Mammary epithelial cell (primary cell): ENCODE measurements at regions of chr17 and their contacts with region 1.

Region 1: GRCh38 chr17:42517516-42517915 is 18.5 kb upstream of the NAGLU start:
- DNase-seq: peak; percentile 75
- H3K4me3 ChIP-seq: no peak overlapping the region
- H3K27ac ChIP-seq: no peak overlapping the region
- H3K4me1 ChIP-seq: peaks cover 44% of the 10 kb centered on the region
- H3K27me3 ChIP-seq: no peaks in the 10 kb centered on the region
- CTCF ChIP-seq: peak; percentile 92 to 98

Region 2: DNA sequence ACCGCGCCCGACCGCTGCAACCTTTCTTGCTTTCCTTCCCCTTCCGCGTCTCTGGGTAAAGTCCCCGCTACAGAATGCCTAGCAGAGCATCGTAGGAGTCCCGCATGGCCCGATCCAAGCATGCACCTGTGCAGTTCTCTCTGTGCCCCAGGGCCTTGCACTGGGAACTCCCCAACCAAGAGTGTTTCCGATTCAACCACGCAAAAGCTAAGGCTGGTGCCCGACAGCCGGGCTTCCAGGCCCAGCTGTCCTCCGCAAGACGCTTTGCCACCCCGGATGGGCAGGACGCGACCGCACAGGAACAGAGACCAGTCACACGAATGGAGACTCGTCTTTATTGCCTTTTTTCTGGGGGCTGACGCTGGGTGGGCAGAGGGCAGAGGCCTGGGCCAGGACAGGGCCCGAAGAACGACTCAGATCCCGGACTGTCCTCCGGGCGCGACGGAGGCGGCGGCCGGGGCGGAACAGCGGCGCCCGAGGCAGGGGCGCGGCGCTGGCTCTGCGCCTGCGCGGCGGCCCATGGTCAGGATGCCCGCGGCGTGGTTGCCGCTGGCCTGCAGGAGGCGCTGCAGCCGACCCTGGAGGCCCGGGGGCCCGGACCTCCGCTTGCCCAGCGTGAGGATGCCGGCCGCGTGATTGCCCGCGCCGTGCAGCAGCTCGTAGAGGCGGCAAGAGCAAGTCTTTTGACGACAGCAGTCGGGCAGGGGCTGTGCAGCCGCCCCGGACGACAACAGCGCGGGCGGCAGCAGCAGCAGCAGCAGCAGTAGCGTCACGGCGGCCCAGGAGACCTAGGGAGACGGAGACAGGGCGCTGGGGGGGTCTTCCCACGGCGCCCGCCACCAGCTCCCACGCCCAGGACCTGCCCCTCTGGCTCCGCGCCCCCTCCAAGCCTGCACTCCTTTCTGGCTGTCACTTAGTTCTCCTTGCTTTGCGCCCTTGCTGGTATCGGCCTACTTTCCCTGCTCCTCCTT is 333.5 kb before region 1 on chr17:
- CTCF ChIA-PET with region 1: interaction called, 3 read pairs
- dilution Hi-C with region 1: loop called (anchors 5 kb)
- in situ Hi-C with region 1: no loop called
- intact Hi-C with region 1: no loop called
- DNase-seq: peak; percentile 12
- H3K4me3 ChIP-seq: peak overlapping the region in 2 of 3 experiments; percentile 35 to 39
- H3K27ac ChIP-seq: no peak overlapping the region
- H3K4me1 ChIP-seq: peaks cover 21% of the 10 kb centered on the region
- H3K27me3 ChIP-seq: peaks cover 12% of the 10 kb centered on the region
- CTCF ChIP-seq: peak; percentile 39 to 47

Region 3: GRCh38 chr17:42322382-42323267 is 194.9 kb before region 1 on chr17:
- CTCF ChIA-PET with region 1: no interaction called
- dilution Hi-C with region 1: no loop called
- in situ Hi-C with region 1: loop called in 1 of 2 experiments (anchors 10 kb)
- intact Hi-C with region 1: loop called (anchors 1 kb)
- DNase-seq: peak; percentile 78
- H3K4me3 ChIP-seq: no peak overlapping the region
- H3K27ac ChIP-seq: no peak overlapping the region
- H3K4me1 ChIP-seq: peaks cover 29% of the 10 kb centered on the region
- H3K27me3 ChIP-seq: no peaks in the 10 kb centered on the region
- CTCF ChIP-seq: peak; percentile 100

Region 4: DNA sequence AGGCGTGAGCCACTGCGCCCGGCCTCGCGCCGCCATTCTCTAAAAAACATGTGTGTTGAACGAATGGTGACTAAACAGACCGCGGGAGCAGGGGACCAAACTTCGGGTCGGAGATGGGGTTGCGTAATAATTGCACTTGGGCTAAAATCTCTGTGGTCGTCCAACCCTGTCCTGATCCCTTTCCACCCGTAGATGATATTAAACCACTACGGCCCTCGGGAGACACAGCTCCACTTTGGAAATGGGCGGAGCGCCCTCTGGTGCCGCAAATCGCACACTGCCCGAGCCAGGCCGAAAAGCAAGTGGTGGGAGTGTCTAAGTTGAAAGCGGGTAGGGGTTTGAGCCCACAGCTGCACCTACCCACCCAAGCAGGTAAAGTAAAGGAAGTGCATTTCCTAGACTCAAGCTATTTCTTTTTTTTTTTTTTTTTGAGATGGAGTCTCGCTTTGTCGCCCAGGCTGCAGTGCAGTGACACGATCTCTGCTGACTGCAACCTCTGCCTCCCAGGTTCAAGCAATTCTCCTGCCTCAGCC is 111.5 kb before region 1 on chr17:
- CTCF ChIA-PET with region 1: no interaction called
- dilution Hi-C with region 1: no loop called
- in situ Hi-C with region 1: no loop called
- intact Hi-C with region 1: loop called (anchors 1 kb)
- DNase-seq: peak; percentile 26
- H3K4me3 ChIP-seq: no peak overlapping the region
- H3K27ac ChIP-seq: no peak overlapping the region
- H3K4me1 ChIP-seq: peaks cover 50% of the 10 kb centered on the region
- H3K27me3 ChIP-seq: no peaks in the 10 kb centered on the region
- CTCF ChIP-seq: peak; percentile 45 to 76

Region 5: GRCh38 chr17:42428141-42428944 is 89.2 kb before region 1 on chr17:
- CTCF ChIA-PET with region 1: no interaction called
- dilution Hi-C with region 1: loop called (anchors 5 kb)
- in situ Hi-C with region 1: no loop called
- intact Hi-C with region 1: loop called (anchors 1 kb)
- DNase-seq: peak; percentile 98
- H3K4me3 ChIP-seq: peak overlapping the region in 1 of 3 experiments; percentile 22
- H3K27ac ChIP-seq: peak overlapping the region; percentile 64
- H3K4me1 ChIP-seq: peaks cover 11% of the 10 kb centered on the region
- H3K27me3 ChIP-seq: no peaks in the 10 kb centered on the region
- CTCF ChIP-seq: peak; percentile 85 to 95

Region 6: GRCh38 chr17:42459256-42459800 is 58.2 kb before region 1 on chr17:
- CTCF ChIA-PET with region 1: interaction called, 4 read pairs
- dilution Hi-C with region 1: no loop called
- in situ Hi-C with region 1: no loop called
- intact Hi-C with region 1: loop called (anchors 2 kb)
- DNase-seq: peak; percentile 63
- H3K4me3 ChIP-seq: peak overlapping the region; percentile 73 to 97 (median 77)
- H3K27ac ChIP-seq: peak overlapping the region; percentile 68
- H3K4me1 ChIP-seq: peaks cover 41% of the 10 kb centered on the region
- H3K27me3 ChIP-seq: no peaks in the 10 kb centered on the region
- CTCF ChIP-seq: peak in 1 of 2 donors; percentile 51